Thyroid gland (tissue), 4 donors: ENCODE measurements at regions of chr2 and their contacts with region 1.

Region 1: GRCh38 chr2:128736689-128737545 is 418.2 kb upstream of the HS6ST1 start:
- DNase-seq: peak; percentile 77 to 82
- H3K4me3 ChIP-seq: no peak overlapping the region
- H3K27ac ChIP-seq: no peak overlapping the region
- H3K4me1 ChIP-seq: peaks cover 7 to 24% of the 10 kb centered on the region in 2 donors
- H3K27me3 ChIP-seq: no peaks in the 10 kb centered on the region
- CTCF ChIP-seq: peak; percentile 83 to 100 (median 96)
- POLR2A ChIP-seq: no peak

Region 2: DNA sequence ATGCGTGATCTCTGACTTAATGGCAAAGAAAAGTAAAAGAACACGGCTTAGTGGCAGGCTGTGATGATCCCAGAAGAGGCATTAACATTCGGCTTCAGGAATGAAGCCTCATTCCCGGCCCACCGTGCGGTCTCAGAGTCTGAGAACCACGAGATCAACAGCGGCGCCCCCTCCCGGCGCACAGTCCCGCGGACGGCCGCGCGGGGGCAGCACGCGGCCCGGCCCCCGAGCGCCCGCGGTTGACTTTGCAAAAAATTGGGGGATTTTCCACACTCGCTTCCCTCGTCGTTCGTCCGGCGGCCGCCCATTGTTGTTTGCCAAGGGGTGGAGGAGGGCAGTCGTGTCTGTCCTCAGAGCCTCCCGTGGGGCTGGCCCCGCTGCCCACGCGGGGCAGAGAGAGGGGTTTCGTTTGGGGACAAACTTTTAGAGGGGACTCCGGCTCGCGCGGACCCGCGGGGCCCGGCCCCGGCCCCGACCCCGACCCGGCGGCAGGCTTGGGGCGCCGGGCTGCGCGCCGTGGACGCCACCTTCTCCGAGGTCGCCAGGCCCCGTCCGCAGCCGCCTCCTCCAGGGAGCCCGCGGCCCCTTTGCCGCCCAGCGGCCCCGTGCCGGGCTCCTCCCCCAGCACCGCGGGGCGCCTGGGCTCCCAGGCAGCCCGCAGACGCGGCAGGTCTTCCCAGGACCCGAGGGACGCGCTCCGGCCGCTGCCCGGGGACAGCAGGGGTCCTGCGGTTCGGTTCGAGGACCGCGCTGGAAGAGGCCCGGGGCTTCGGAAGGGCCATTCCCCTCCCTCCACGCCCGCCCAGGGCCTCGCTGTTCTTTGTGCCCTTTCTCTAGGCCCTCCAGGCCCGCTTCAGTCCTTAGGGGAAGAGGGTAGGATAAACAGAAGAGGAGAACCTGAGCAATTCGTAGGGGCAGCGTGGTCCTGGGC is 414.9 kb before region 1 on chr2:
- intact Hi-C with region 1: loop called (anchors 10 kb)
- DNase-seq: peak; percentile 85 to 87
- H3K4me3 ChIP-seq: peak overlapping the region in 2 of 3 donors; percentile 28 to 48
- H3K27ac ChIP-seq: peak overlapping the region; percentile 37 to 77 (median 48)
- H3K4me1 ChIP-seq: peaks cover 15% of the 10 kb centered on the region in 2 donors
- H3K27me3 ChIP-seq: no peaks in the 10 kb centered on the region
- CTCF ChIP-seq: peak; percentile 3 to 99 (median 96)
- POLR2A ChIP-seq: peak in 1 of 2 donors; percentile 69

Region 3: DNA sequence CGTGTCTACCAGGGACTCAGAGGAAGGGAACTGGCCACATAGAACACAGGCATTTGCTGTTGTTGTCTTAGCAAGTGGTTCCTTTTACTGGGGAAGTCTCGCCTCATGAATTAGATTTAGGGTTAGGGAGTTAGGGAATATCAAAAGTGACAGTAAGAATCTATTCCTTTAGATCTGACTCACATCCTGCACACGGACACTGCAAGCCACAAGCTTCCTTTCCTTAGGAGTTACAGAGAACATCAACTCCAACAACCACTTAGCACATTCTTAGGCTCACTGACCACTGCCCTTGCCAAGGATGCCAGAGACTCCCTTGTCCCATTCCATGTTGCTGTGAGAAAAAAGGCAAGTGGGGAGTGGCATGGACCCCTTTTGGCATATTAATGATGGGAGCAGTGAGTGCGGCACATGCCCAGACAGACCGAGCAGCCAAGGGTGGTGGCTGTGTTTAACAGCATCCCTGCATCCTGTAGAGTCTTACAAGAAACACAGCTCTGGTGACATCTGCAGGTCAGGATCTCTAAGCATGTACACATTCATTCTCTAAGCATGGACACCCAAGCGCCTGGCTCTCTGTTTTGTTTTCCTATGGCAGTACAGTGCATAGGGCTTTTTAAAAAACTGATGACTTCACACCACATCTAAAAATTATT is 497.0 kb after region 1 on chr2:
- intact Hi-C with region 1: loop called (anchors 10 kb)
- DNase-seq: peak; percentile 9 to 23
- H3K4me3 ChIP-seq: no peak overlapping the region
- H3K27ac ChIP-seq: no peak overlapping the region
- H3K4me1 ChIP-seq: no peaks in the 10 kb centered on the region
- H3K27me3 ChIP-seq: no peaks in the 10 kb centered on the region
- CTCF ChIP-seq: peak in 2 of 6 experiments; percentile 14 to 22
- POLR2A ChIP-seq: no peak

Region 4: GRCh38 chr2:129396980-129397599 is 660.2 kb after region 1 on chr2:
- intact Hi-C with region 1: loop called (anchors 10 kb)
- DNase-seq: peak; percentile 47 to 60
- H3K4me3 ChIP-seq: no peak overlapping the region
- H3K27ac ChIP-seq: no peak overlapping the region
- H3K4me1 ChIP-seq: no peaks in the 10 kb centered on the region
- H3K27me3 ChIP-seq: no peaks in the 10 kb centered on the region
- CTCF ChIP-seq: peak in 4 of 6 experiments; percentile 46 to 78 (median 64)
- POLR2A ChIP-seq: no peak

Region 5: GRCh38 chr2:129923265-129924091 is 1186.6 kb after region 1 on chr2:
- intact Hi-C with region 1: loop called (anchors 10 kb)
- DNase-seq: peak; percentile 36 to 39
- H3K4me3 ChIP-seq: no peak overlapping the region
- H3K27ac ChIP-seq: no peak overlapping the region
- H3K4me1 ChIP-seq: peaks cover 7 to 8% of the 10 kb centered on the region in 2 donors
- H3K27me3 ChIP-seq: no peaks in the 10 kb centered on the region
- CTCF ChIP-seq: peak in 4 of 6 experiments; percentile 18 to 57 (median 32)
- POLR2A ChIP-seq: no peak